HCT116 (cell line): ENCODE measurements at regions of chr19 and their contacts with region 1.

Region 1: DNA sequence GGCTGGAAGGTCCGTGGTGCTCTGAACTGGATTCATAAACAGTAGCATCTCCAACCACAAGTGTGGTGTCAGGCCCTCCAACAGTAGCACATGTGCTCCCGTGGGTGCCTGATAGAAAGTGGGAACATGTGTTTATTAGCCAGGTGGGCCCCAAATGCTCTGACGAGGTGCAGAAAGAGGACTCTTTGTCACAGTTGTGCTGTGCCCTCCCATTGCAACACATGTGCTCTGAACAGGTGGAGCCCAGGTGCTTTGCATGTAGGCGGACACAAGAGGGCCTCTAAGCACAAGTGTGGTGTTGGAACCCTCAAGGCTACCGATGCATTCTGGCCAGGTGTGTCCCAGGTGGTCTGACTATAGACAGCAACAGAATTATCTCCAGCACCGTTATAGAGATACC is 75.3 kb upstream of the ZNF30 start:
- DNase-seq: peak; percentile 18
- ATAC-seq: peak; percentile 70
- H3K4me3 ChIP-seq: no peak overlapping the region
- H3K27ac ChIP-seq: no peak overlapping the region
- H3K4me1 ChIP-seq: no peaks in the 10 kb centered on the region
- H3K27me3 ChIP-seq: no peaks in the 10 kb centered on the region
- CTCF ChIP-seq: peak in 2 of 3 experiments; percentile 24 to 27; a peak in 4 of 6 replicates
- POLR2A ChIP-seq: no peak
- RAD21 ChIP-seq: peak; percentile 60

Region 2: GRCh38 chr19:34559045-34559444 is 292.3 kb before region 1 on chr19:
- CTCF ChIA-PET with region 1: no interaction called
- POLR2A ChIA-PET with region 1: no interaction called
- RAD21 ChIA-PET with region 1: no interaction called
- intact Hi-C with region 1: no loop called
- DNase-seq: no peak
- ATAC-seq: no peak
- H3K4me3 ChIP-seq: no peak overlapping the region
- H3K27ac ChIP-seq: no peak overlapping the region
- H3K4me1 ChIP-seq: no peaks in the 10 kb centered on the region
- H3K27me3 ChIP-seq: peaks cover 5% of the 10 kb centered on the region; the same call in 1 of the 2 replicates
- CTCF ChIP-seq: no peak
- POLR2A ChIP-seq: no peak
- RAD21 ChIP-seq: no peak

Region 3: DNA sequence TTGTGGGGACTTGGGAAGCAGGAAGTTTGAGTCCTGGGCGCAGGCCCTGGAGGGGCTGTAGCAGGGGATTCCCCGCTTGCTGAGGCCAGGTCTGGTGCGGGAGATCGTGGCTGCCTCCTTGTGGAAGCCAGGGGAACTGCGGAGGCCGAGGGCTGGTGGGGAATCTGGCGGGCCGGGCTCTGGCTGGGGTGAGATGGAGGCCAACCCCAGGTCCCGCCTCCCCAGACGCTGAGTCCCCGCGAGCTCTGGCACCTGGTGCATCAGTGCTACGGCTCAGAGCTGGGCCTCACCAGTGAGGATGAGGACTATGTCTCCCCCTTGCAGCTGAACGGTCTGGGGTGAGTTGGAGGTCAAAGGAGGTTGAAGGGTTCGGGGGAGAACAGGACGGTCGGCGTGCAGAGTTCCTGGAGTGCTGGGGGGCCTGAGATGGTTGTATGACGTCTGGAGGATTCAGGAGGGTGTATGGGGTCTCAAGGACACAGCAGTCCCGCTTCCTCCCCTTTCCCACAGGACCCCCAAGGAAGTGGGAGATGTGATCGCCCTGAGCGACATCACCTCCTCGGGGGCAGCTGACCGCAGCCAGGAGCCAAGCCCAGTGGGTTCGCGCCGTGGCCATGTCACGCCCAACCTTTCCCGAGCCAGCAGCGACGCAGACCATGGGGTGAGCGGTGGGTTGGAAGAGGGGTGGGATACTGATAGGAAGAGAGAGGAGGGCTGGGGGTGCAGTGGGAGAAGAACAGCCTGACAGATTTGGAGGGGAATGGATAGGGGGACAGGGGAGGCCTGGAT is 161.9 kb after region 1 on chr19:
- CTCF ChIA-PET with region 1: no interaction called
- POLR2A ChIA-PET with region 1: no interaction called
- RAD21 ChIA-PET with region 1: no interaction called
- intact Hi-C with region 1: loop called (anchors 5 kb)
- DNase-seq: no peak
- ATAC-seq: peak; percentile 77
- H3K4me3 ChIP-seq: no peak overlapping the region
- H3K27ac ChIP-seq: no peak overlapping the region
- H3K4me1 ChIP-seq: no peaks in the 10 kb centered on the region
- H3K27me3 ChIP-seq: no peaks in the 10 kb centered on the region
- CTCF ChIP-seq: peak; percentile 69 to 93 (median 83)
- POLR2A ChIP-seq: no peak
- RAD21 ChIP-seq: peak; percentile 78